ENCODE measurements at regions of chr4 and their contacts with region 1.

Region 1: DNA sequence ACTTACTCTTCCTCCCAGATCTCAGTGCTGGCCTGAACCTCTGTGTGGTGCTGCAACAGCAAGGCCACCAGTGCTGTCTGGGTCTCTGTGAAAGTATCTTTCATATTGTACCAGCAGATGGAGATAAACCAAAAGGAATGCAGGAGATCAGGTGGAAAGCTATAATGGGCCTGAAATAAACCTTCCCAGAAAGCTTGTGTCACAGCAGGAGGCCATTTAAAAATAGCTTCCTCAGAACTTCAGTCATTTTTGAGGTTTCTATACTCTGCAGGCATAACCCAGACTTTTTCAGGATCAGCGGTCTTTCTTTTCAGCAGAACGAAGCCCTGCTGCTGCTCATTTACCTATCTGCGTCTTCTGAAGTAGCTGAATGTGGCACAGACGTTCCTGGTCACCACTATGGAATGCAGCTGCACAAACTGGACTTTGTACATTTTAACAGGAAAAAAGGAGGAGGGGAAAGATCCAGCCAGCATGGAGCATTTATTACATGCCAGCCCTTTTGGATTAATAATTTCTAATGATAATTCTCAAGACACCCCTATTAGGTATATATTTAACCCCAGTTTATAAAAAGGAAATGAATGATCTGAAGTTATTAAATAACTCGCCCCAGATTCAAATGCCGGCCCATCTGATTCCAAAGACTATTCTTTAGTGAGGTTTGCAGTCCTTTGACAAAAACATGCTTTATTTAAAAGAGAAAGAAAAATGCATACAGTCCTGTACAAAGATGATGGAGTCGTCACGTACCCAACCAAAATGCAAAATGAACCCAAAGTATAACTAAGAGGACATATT is 119.7 kb downstream of the NFKB1 start:
- DNase-seq: peak in 2 of 5 donors; percentile 27 to 35
- H3K4me3 ChIP-seq: no peak overlapping the region
- H3K4me3 Mint-ChIP-seq: peak overlapping the region in 1 of 8 donors; percentile 40
- H3K27ac ChIP-seq: no peak overlapping the region
- H3K27ac Mint-ChIP-seq: peak overlapping the region in 5 of 7 donors; percentile 20 to 82 (median 80)
- H3K4me1 ChIP-seq: peaks cover 18% of the 10 kb centered on the region
- H3K4me1 Mint-ChIP-seq: peaks cover 19 to 70% (median 40%) of the 10 kb centered on the region in 4 donors
- H3K27me3 ChIP-seq: no peaks in the 10 kb centered on the region
- H3K27me3 Mint-ChIP-seq: no peaks in the 10 kb centered on the region

Region 2: DNA sequence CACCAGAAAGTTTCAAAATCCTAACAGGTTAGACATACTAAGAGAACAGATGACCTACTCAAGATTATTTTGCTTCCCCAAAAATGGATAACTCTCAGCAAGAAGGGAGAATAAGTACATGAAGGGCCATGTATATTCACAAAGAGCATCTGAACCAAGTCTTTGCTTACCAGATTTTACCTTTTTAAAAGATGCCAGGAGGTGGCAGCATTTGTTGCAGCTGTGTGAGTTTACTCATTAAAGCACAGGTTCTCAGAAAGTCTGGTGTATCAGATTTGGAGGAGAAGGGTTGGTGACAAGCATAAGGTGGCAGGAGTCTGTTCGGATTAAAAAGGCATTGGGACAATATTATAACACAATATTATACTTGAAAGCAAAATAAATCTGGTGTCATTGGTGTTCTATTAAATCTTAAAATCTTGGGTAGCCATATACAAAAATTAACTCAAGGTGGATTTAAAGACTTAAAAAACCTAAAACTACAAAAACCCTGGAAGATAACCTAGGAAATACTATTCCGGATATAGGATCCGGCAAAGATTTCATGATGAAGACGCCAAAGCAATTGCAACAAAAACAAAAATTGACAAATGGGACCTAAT is 171.0 kb before region 1 on chr4:
- CTCF ChIA-PET with region 1: interaction called, 67 read pairs
- POLR2A ChIA-PET with region 1: interaction called, 5 read pairs
- intact Hi-C with region 1: loop called (anchors 1 kb)
- DNase-seq: peak; percentile 67 to 75 (median 68)
- H3K4me3 ChIP-seq: no peak overlapping the region
- H3K4me3 Mint-ChIP-seq: no peak overlapping the region
- H3K27ac ChIP-seq: no peak overlapping the region
- H3K27ac Mint-ChIP-seq: no peak overlapping the region
- H3K4me1 ChIP-seq: peaks cover 12% of the 10 kb centered on the region
- H3K4me1 Mint-ChIP-seq: peaks cover 5 to 21% (median 9%) of the 10 kb centered on the region in 4 donors
- H3K27me3 ChIP-seq: no peaks in the 10 kb centered on the region
- H3K27me3 Mint-ChIP-seq: no peaks in the 10 kb centered on the region

Region 3: DNA sequence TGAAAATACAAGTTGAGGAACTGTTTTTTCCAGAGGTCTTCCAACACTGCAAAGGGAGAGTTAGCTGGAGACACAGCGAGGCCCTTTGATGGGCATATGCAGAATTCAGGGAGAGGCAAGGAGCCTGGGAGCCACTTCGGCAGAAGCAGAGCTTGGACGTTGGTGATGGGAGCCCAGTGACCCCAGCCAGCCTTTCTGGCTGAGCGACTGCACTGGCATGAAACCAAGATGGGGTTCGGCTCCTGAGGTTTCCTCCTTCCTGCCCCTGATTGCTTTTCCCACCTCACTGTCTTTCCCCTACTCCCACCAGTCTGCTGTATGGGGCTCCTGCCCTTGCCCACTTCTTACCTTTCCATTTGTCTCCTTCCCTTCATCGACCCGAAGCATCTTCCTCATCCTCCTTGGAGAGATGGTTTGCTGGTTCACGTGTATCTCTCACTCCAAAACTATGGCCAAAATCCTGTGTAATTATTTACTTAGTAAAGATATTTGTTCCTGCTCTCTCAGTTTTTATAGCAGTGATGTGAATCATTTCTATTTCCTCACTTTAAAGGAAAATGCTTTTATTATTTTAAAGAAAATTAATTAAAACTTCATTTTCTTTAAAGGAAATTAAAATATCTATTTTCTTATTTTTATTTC is 19.2 kb before region 1 on chr4:
- CTCF ChIA-PET with region 1: no interaction called
- POLR2A ChIA-PET with region 1: no interaction called
- intact Hi-C with region 1: no loop called
- DNase-seq: no peak
- H3K4me3 ChIP-seq: no peak overlapping the region
- H3K4me3 Mint-ChIP-seq: no peak overlapping the region
- H3K27ac ChIP-seq: no peak overlapping the region
- H3K27ac Mint-ChIP-seq: peak overlapping the region in 3 of 7 donors; percentile 47 to 85 (median 68)
- H3K4me1 ChIP-seq: peaks cover 59% of the 10 kb centered on the region
- H3K4me1 Mint-ChIP-seq: peaks cover 44 to 84% (median 65%) of the 10 kb centered on the region in 4 donors
- H3K27me3 ChIP-seq: no peaks in the 10 kb centered on the region
- H3K27me3 Mint-ChIP-seq: no peaks in the 10 kb centered on the region